ENCODE measurements at regions of chr3 and their contacts with region 1.

Region 1: GRCh38 chr3:112642912-112643506 is 2.1 kb upstream of the CCDC80 start:
- DNase-seq: peak; percentile 69 to 77 (median 77)
- H3K4me3 ChIP-seq: peak overlapping the region in 1 of 3 experiments; percentile 42
- H3K4me3 Mint-ChIP-seq: peak overlapping the region; percentile 48 to 80
- H3K27ac ChIP-seq: no peak overlapping the region
- H3K27ac Mint-ChIP-seq: no peak overlapping the region
- H3K4me1 ChIP-seq: peaks cover 4 to 7% of the 10 kb centered on the region in 2 donors
- H3K4me1 Mint-ChIP-seq: peaks cover 11% of the 10 kb centered on the region
- H3K27me3 ChIP-seq: peaks cover 13 to 14% of the 10 kb centered on the region in 2 donors
- H3K27me3 Mint-ChIP-seq: peaks cover 1 to 7% (median 5%) of the 10 kb centered on the region in 3 donors
- CTCF ChIP-seq: peak; percentile 76

Region 2: DNA sequence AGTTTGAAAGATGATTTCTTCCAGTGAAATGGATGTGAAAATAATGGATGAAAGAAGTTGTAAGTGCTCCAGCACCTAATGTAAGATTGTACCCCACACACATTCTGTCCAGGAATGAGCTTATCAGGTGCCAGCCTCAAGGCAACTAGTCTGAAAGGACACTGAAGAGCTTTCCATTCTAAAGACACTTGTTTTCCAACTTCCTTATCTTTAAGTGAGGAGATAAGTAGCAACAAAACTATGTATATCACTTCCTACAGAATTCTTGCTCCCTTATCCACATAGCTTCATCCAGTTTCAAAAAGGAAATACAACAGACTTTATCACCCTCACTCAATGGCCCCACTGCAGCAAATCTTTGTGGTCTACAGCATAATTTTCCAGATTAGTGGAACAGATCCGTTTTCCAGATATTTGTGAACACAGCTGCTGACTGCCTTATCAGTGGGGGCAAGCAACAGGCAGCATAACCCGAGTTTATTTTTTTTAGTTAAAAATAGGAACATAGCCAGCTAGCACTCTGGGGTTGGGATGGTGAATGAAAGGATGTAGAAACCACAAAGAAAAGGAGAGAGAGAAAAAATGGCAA is 143.1 kb after region 1 on chr3:
- intact Hi-C with region 1: loop called in 1 of 2 experiments (anchors 10 kb)
- DNase-seq: no peak
- H3K4me3 ChIP-seq: no peak overlapping the region
- H3K4me3 Mint-ChIP-seq: no peak overlapping the region
- H3K27ac ChIP-seq: no peak overlapping the region
- H3K27ac Mint-ChIP-seq: peak overlapping the region in 1 of 7 donors; percentile 6
- H3K4me1 ChIP-seq: peaks cover 10 to 12% of the 10 kb centered on the region in 2 donors
- H3K4me1 Mint-ChIP-seq: peaks cover 9% of the 10 kb centered on the region
- H3K27me3 ChIP-seq: no peaks in the 10 kb centered on the region
- H3K27me3 Mint-ChIP-seq: peaks cover 0 to 3% (median 0%) of the 10 kb centered on the region in 3 donors
- CTCF ChIP-seq: no peak

Region 3: DNA sequence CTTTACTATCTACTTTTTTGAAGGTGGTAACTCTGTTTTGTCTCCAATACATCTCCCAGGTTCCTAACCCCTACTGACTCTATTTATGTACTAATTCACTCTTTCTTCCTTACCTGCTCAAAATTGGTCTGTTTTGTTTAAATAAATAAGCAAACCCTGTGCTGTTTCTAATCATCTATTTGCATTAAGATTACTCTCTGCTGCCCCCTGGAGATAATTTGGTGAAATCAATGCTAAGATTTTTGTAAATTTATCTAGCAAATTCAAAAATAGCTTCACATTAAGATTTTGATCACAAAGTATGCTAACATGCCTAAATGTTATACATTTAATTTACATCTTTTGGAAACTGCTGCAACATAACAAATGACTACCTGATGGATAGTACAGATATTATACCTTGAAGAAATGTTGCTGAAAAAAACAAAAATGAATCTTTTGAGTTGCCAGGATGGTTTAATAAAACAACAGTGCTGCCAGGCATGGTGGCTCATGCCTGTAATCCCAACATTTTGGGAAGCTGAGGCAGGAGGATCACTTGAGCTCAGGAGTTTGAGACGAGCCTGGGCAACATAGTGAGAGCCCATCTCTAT is 336.3 kb after region 1 on chr3:
- intact Hi-C with region 1: loop called (anchors 5 kb)
- DNase-seq: peak; percentile 33 to 55 (median 39)
- H3K4me3 ChIP-seq: no peak overlapping the region
- H3K4me3 Mint-ChIP-seq: no peak overlapping the region
- H3K27ac ChIP-seq: no peak overlapping the region
- H3K27ac Mint-ChIP-seq: no peak overlapping the region
- H3K4me1 ChIP-seq: peaks cover 41 to 44% of the 10 kb centered on the region in 2 donors
- H3K4me1 Mint-ChIP-seq: peaks cover 51% of the 10 kb centered on the region
- H3K27me3 ChIP-seq: no peaks in the 10 kb centered on the region
- H3K27me3 Mint-ChIP-seq: peaks cover 0 to under 1% (median 0%) of the 10 kb centered on the region in 3 donors
- CTCF ChIP-seq: peak; percentile 87

Region 4: GRCh38 chr3:112984485-112984884 is 341.5 kb after region 1 on chr3:
- intact Hi-C with region 1: loop called (anchors 5 kb)
- DNase-seq: no peak
- H3K4me3 ChIP-seq: no peak overlapping the region
- H3K4me3 Mint-ChIP-seq: no peak overlapping the region
- H3K27ac ChIP-seq: no peak overlapping the region
- H3K27ac Mint-ChIP-seq: no peak overlapping the region
- H3K4me1 ChIP-seq: peaks cover 4 to 9% of the 10 kb centered on the region in 2 donors
- H3K4me1 Mint-ChIP-seq: peaks cover 9% of the 10 kb centered on the region
- H3K27me3 ChIP-seq: no peaks in the 10 kb centered on the region
- H3K27me3 Mint-ChIP-seq: no peaks in the 10 kb centered on the region
- CTCF ChIP-seq: no peak

Measured in CD14-positive monocyte (primary cell).